Left ventricle myocardium superior (tissue), 1 donor: ENCODE measurements at regions of chr18 and their contacts with region 1.

Region 1: GRCh38 chr18:39732918-39733317 is 2167.3 kb upstream of the CELF4 start:
- DNase-seq: no peak
- ATAC-seq: no peak

Region 2: DNA sequence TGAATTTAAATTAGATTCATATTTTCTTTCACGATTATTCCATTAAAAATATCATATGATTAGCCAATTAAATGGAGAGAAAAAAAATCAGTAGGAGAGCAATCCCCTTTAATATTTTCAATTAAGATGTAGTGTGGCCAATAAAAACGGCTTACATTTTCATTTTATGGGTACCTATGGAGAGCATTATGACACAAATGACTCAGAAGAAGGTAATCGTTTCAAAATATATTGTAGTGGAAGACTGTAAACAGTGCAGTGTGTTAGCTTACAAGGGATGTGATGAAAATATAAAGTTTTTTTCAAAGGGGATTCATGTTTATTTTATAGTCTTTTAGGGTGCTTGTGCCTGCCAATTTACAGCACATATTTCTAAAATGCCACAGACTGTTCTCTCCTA is 659.9 kb before region 1 on chr18:
- intact Hi-C with region 1: loop called (anchors 10 kb)
- DNase-seq: no peak
- ATAC-seq: no peak

Region 3: DNA sequence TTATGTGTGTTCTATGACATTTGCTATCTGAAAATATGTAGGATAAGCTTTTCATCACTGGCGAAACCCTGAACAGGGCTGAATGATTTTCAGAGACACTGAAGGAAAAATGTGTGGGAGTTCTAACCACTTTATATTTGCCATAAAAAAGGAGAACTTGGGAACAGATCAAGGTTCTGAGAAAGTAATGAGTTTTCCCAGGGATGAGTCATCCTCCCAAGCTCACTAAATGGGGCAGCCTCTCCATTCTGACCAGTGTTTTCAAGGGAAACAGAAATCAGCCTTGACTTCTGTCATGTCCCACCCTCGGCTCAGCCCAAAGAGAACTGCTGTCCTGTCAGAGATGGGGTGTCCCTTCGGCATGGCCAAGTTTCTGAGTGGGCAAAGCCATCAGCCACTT is 57.5 kb before region 1 on chr18:
- intact Hi-C with region 1: no loop called
- DNase-seq: no peak
- ATAC-seq: no peak

Region 4: DNA sequence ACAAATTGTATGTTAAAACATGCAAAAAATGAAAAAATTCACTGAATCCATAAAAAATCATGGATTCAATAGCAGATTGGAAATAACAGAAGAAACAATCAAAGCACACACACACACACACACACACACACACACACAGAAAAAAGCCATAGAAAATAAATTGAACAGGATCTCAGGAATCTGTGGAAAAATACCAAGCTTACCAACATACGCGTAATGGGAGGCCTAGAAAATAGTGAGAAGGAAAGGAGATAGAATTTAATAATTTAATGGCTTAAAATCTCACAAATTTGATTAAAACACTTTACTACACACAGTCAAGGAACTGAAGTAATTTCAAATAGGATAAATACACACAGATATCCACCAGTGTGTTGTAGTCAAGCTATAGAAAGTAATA is 550.6 kb after region 1 on chr18:
- intact Hi-C with region 1: no loop called
- DNase-seq: no peak
- ATAC-seq: no peak